ENCODE measurements at regions of chr1 and their contacts with region 1.

Region 1: GRCh38 chr1:59163268-59164092 is 133.4 kb upstream of the FGGY start:
- DNase-seq: no peak
- ATAC-seq: no peak
- H3K4me3 Mint-ChIP-seq: no peak overlapping the region
- H3K27ac Mint-ChIP-seq: no peak overlapping the region
- H3K4me1 Mint-ChIP-seq: no peaks in the 10 kb centered on the region
- H3K27me3 Mint-ChIP-seq: peaks cover 8% of the 10 kb centered on the region

Region 2: GRCh38 chr1:59107916-59108315 is 55.6 kb before region 1 on chr1:
- CTCF ChIA-PET with region 1: interaction called, 3 read pairs
- POLR2A ChIA-PET with region 1: interaction called, 13 read pairs
- intact Hi-C with region 1: no loop called
- DNase-seq: no peak
- ATAC-seq: no peak
- H3K4me3 Mint-ChIP-seq: no peak overlapping the region
- H3K27ac Mint-ChIP-seq: no peak overlapping the region
- H3K4me1 Mint-ChIP-seq: no peaks in the 10 kb centered on the region
- H3K27me3 Mint-ChIP-seq: no peaks in the 10 kb centered on the region